GM12878 (cell line): ENCODE measurements at regions of chr12 and their contacts with region 1.

Region 1: DNA sequence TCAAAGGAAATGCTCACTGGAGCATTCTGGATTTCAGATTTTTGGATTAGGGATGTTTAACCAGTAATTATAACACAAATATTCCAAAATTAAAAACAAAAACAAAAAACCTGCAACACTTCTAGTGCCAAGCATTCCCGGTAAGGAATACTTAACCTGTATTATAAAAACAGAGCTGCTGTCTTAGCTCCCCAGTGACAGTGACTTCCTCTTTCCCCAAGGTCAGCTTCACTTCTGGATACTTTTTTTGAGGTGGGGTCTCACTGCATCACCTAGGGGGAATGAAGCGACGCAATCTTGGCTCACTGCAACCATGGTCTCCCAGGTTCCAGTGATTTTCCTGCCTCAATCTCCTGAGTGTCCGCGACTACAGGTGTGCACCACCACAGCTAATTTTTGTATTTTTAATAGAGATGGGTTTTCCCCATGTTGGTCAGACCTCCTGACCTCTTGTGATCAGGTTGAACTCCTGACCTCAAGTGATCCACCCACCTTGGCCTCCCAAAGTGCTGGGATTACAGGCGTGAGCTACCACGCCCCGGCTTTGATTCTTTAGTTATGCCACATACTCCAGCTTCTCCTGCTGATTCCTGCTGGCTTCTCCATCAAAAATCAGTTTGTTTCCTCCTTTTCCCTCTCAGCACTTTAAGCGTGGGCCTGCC is 15.9 kb downstream of the PPP1CC start:
- DNase-seq: no peak
- ATAC-seq: peak; percentile 55
- H3K4me3 ChIP-seq: no peak overlapping the region; the same call in 1 of the 2 replicates
- H3K27ac ChIP-seq: peak overlapping the region; percentile 38
- H3K4me1 ChIP-seq: peaks cover 16% of the 10 kb centered on the region
- H3K27me3 ChIP-seq: no peaks in the 10 kb centered on the region
- CTCF ChIP-seq: no peak
- EP300 ChIP-seq: no peak
- POLR2A ChIP-seq: no peak
- RAD21 ChIP-seq: no peak

Region 2: DNA sequence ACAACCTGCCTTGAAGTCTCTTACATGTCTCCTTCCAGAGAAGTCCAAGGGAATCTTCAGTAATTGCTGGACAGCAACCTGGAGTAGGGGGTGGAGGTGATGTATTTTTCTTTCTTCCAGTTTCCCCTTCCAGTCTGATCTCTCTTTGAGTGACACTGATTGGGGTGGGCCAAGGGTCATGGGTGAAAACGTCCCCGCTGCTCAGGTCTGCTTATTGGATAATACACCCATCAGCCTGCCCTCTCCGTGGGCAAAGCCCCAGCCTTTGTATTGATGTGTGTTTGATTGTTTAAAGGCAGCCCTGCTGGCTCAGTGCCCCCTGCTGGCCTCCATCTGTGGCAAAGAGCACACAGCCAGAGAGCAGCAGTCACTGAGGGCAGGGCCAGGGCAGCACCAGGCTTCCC is 481.5 kb before region 1 on chr12:
- CTCF ChIA-PET with region 1: no interaction called
- POLR2A ChIA-PET with region 1: no interaction called
- RAD21 ChIA-PET with region 1: no interaction called
- SMC1A ChIA-PET with region 1: no interaction called
- in situ Hi-C with region 1: no loop called
- intact Hi-C with region 1: no loop called
- DNase-seq: no peak
- ATAC-seq: peak; percentile 97
- H3K4me3 ChIP-seq: no peak overlapping the region
- H3K27ac ChIP-seq: no peak overlapping the region
- H3K4me1 ChIP-seq: peaks cover 5% of the 10 kb centered on the region; the same call in 1 of the 2 replicates
- H3K27me3 ChIP-seq: no peaks in the 10 kb centered on the region
- CTCF ChIP-seq: peak; percentile 67 to 81 (median 74)
- EP300 ChIP-seq: no peak
- POLR2A ChIP-seq: no peak
- RAD21 ChIP-seq: peak; percentile 66

Region 3: GRCh38 chr12:110649341-110649847 is 77.4 kb before region 1 on chr12:
- CTCF ChIA-PET with region 1: no interaction called
- POLR2A ChIA-PET with region 1: no interaction called
- RAD21 ChIA-PET with region 1: no interaction called
- SMC1A ChIA-PET with region 1: no interaction called
- in situ Hi-C with region 1: no loop called
- intact Hi-C with region 1: no loop called
- DNase-seq: no peak
- ATAC-seq: no peak
- H3K4me3 ChIP-seq: no peak overlapping the region
- H3K27ac ChIP-seq: no peak overlapping the region
- H3K4me1 ChIP-seq: peaks cover 17% of the 10 kb centered on the region
- H3K27me3 ChIP-seq: no peaks in the 10 kb centered on the region
- CTCF ChIP-seq: no peak
- EP300 ChIP-seq: no peak
- POLR2A ChIP-seq: no peak
- RAD21 ChIP-seq: no peak

Region 4: DNA sequence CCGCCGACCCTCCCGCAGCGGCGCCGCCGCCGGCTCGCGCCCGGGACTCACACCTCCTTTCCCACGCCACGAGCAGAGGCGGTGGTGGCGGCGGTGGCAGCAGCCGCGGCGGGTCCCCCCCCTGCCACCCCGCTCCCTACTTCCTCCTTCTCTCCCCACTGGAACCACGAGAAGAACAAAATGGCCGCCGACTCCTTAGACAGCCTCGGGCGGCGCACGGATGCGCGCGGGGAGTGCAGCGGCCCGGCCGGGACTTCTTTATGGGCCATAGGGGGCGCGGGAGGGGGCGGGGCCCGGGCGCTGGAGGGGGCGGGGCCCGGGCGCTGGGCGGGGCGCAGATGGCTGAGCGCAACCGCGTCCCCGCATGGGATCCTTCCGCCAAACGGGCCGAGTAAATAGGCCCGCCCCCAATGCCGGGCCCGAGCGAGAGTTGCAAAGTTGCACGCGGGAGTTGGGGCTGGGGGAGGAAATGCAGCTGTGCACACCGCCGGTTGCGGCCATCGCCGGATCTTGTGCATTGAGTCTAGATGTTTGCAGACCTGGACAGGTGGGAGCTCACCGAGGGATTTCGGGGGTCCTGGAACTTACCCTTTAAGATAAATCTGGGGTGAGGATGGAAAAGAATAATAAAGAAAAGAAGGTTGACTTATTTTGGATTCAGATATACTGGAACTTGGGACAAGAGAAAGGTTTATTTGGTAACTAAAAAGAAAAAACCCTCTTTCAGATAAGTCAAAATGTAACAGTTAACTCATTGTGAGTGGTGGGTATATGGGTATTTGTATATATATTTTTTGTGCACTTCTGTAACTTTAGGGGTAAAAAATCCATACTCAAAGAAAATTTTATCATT is 16.1 kb after region 1 on chr12 and contains the start of gene PPP1CC:
- CTCF ChIA-PET with region 1: interaction called, 7 read pairs
- POLR2A ChIA-PET with region 1: interaction called, 21 read pairs
- RAD21 ChIA-PET with region 1: interaction called, 10 read pairs
- SMC1A ChIA-PET with region 1: interaction called, 55 read pairs
- in situ Hi-C with region 1: no loop called
- intact Hi-C with region 1: no loop called
- DNase-seq: peak; percentile 48
- ATAC-seq: peak; percentile 84
- H3K4me3 ChIP-seq: peak within 1 kb of the TSS; percentile 85
- H3K27ac ChIP-seq: peak within 1 kb of the TSS; percentile 63
- H3K4me1 ChIP-seq: peaks cover 6% of the 10 kb centered on the region; the same call in 1 of the 2 replicates
- H3K27me3 ChIP-seq: no peaks in the 10 kb centered on the region
- CTCF ChIP-seq: no peak
- EP300 ChIP-seq: no peak
- POLR2A ChIP-seq: peak; percentile 95
- RAD21 ChIP-seq: no peak
- polyA plus RNA-seq, gene PPP1CC: 64.4 to 111 TPM

Region 5: GRCh38 chr12:110947729-110948448 is 221.1 kb after region 1 on chr12:
- CTCF ChIA-PET with region 1: no interaction called
- POLR2A ChIA-PET with region 1: no interaction called
- RAD21 ChIA-PET with region 1: no interaction called
- SMC1A ChIA-PET with region 1: no interaction called
- in situ Hi-C with region 1: no loop called
- intact Hi-C with region 1: no loop called
- DNase-seq: no peak
- ATAC-seq: no peak
- H3K4me3 ChIP-seq: no peak overlapping the region
- H3K27ac ChIP-seq: no peak overlapping the region
- H3K4me1 ChIP-seq: no peaks in the 10 kb centered on the region
- H3K27me3 ChIP-seq: no peaks in the 10 kb centered on the region
- CTCF ChIP-seq: no peak
- EP300 ChIP-seq: no peak
- POLR2A ChIP-seq: no peak
- RAD21 ChIP-seq: no peak

Region 6: DNA sequence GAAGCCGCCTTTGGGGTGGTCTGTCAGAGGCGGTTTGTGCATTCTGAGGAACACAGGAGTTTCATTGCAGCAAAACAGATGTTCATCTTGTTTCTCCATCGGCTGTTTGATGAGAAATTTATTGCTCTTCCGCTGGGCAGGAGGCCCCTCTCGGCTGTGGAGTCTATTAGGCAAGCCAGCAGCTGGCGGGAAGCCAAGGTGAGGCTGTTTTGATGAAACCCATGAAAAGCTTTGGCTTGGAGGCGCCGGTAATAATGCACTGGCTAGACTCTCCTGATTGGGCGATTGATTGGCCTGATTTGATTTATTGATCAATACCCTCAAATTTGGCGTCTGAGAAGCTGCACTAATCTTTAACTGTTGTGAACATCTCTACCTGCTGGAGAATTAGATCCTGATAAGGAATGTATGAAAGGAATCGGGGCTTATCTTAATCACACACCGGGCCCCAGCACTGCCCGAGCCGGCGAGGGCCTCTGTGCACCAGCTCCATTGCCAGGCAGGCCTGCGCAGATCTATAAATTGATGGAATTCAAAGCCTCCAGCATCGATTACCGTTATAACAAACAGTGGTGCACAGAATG is 454.4 kb after region 1 on chr12:
- CTCF ChIA-PET with region 1: no interaction called
- POLR2A ChIA-PET with region 1: no interaction called
- RAD21 ChIA-PET with region 1: no interaction called
- SMC1A ChIA-PET with region 1: no interaction called
- in situ Hi-C with region 1: no loop called
- intact Hi-C with region 1: no loop called
- DNase-seq: no peak
- ATAC-seq: no peak
- H3K4me3 ChIP-seq: no peak overlapping the region
- H3K27ac ChIP-seq: no peak overlapping the region
- H3K4me1 ChIP-seq: no peaks in the 10 kb centered on the region
- H3K27me3 ChIP-seq: peaks cover 0 to 4% of the 10 kb centered on the region in 2 experiments; a peak in 2 of 4 replicates
- CTCF ChIP-seq: no peak
- EP300 ChIP-seq: no peak
- POLR2A ChIP-seq: no peak
- RAD21 ChIP-seq: no peak